ENCODE measurements at regions of chr1 and their contacts with region 1.

Region 1: DNA sequence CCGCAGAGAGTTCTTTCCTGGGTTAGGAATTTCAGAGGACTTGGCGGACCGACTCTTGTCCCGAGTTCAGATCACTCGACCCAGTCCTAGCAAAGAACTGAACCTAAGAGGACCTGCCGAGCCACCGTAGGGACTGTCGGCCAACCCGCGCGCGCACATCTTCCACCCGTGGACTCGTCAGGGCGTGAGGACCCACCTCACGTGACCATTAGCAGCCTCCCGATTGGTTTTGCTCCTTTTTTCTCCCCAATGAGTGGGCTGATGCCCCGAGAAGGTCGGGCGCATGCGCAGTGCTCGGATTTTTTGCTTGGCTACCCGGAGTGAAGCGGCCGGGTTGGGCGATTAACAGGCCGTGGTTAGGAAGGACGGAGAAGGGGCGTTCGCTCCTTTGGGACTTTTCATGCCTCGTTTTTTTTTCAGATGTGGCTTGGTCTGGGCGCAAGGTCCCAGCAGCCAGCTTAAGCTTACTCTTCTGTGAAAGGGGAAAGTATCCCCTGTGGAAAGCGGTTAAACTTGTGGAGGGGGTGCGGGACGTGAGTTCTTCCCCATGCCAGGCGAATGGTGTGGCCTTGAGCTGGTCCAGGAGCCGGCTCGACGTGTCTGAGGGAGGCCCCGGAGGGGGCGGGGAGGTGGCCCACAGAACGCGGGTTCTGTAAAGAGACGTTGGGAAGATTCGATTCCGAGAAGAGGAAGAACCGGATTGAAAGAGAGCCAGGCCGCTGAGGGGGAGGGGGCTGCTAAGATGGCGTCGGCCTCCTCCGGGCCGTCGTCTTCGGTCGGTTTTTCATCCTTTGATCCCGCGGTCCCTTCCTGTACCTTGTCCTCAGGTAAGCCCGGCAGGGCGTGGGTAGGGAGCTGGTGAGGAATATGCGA is at the start of gene PIP5K1A:
- DNase-seq: peak; percentile 96 to 100 (median 99)
- ATAC-seq: peak; percentile 94
- H3K4me3 ChIP-seq: peak within 1 kb of the TSS; percentile 88 to 91
- H3K4me3 Mint-ChIP-seq: peak within 1 kb of the TSS; percentile 97
- H3K27ac ChIP-seq: peak within 1 kb of the TSS; percentile 78 to 86
- H3K27ac Mint-ChIP-seq: peak within 1 kb of the TSS; percentile 92
- H3K4me1 ChIP-seq: peaks cover 28% of the 10 kb centered on the region
- H3K4me1 Mint-ChIP-seq: peaks cover 45% of the 10 kb centered on the region
- H3K27me3 ChIP-seq: no peaks in the 10 kb centered on the region
- H3K27me3 Mint-ChIP-seq: no peaks in the 10 kb centered on the region
- CTCF ChIP-seq: no peak
- total RNA-seq, gene PIP5K1A: 37.2 to 48.2 TPM

Region 2: DNA sequence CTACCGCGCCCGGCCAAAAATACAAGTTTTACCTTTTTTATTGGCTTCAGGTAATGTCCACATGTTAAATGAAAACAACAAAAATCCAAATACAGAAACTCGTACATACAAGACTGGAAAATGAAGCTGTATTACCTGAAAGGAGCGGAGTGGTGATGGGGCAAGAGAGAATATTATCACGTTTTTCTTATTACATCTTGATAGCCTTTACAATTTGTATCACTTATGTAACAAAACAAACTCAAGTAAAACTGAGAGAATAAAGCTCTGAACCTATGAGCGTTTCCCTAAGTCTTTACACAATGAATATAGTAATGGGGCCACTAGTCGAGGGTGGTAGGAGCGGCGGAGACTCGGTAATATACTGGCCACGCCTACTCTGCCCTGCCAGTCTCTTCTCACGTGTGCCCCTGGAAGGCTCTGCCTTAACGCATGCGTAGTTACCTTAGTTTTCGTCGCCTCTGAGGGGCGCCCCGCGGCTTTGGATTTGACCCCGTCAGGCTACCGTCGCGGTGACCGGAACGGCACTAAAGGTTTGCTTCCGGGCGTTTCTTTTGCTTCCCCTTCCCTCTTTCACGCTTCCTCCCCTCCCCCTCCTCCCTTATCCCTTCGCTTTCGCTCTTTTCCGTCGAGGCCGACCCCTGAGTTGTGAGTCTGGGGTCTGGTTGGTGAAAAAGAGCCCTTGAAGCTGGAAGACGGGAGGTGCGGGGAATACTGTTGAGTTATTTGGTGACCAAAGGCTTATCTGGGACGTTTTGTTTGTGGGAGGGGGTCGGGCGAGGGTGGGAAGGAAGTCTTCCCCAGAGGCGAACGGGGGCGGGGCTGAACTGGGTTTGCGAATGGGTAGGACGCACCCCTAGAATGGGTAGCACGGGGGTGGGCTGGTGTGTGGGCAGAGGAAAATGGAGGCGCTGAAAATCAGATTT is 272.4 kb before region 1 on chr1 and contains the start of gene SETDB1:
- CTCF ChIA-PET with region 1: no interaction called
- POLR2A ChIA-PET with region 1: no interaction called
- intact Hi-C with region 1: no loop called
- DNase-seq: peak; percentile 84 to 98 (median 91)
- ATAC-seq: peak; percentile 96
- H3K4me3 ChIP-seq: peak within 1 kb of the TSS; percentile 91 to 93
- H3K4me3 Mint-ChIP-seq: peak within 1 kb of the TSS; percentile 94
- H3K27ac ChIP-seq: peak within 1 kb of the TSS; percentile 79 to 93
- H3K27ac Mint-ChIP-seq: peak within 1 kb of the TSS; percentile 93
- H3K4me1 ChIP-seq: peaks cover 17% of the 10 kb centered on the region
- H3K4me1 Mint-ChIP-seq: peaks cover 31% of the 10 kb centered on the region
- H3K27me3 ChIP-seq: no peaks in the 10 kb centered on the region
- H3K27me3 Mint-ChIP-seq: no peaks in the 10 kb centered on the region
- CTCF ChIP-seq: no peak
- total RNA-seq, gene SETDB1: 44.1 to 47.4 TPM

Region 3: DNA sequence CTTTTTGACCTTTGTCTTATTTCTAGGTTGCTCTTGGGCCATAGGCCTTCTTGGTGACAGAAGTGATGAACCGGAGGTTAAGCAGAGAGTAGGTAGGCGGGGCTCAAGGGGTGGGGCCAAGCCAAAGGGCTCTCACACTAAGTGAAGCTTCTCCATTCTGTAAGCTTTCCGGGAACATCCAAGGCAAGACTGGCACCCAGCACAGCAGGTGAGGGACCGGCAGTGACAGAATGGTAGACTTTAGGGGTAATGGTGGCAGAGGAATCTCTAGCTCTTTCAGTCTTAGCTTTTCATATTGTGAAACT is 42.0 kb before region 1 on chr1 and contains the start of gene TNFAIP8L2:
- CTCF ChIA-PET with region 1: interaction called, 3 read pairs
- POLR2A ChIA-PET with region 1: interaction called, 3 read pairs
- intact Hi-C with region 1: loop called in 1 of 2 experiments (anchors 2 kb)
- DNase-seq: peak; percentile 45 to 86 (median 74)
- ATAC-seq: peak; percentile 83
- H3K4me3 ChIP-seq: peak within 1 kb of the TSS; percentile 83 to 89
- H3K4me3 Mint-ChIP-seq: peak within 1 kb of the TSS; percentile 97
- H3K27ac ChIP-seq: peak within 1 kb of the TSS; percentile 55 to 70
- H3K27ac Mint-ChIP-seq: peak within 1 kb of the TSS; percentile 92
- H3K4me1 ChIP-seq: peaks cover 35% of the 10 kb centered on the region
- H3K4me1 Mint-ChIP-seq: peaks cover 55% of the 10 kb centered on the region
- H3K27me3 ChIP-seq: no peaks in the 10 kb centered on the region
- H3K27me3 Mint-ChIP-seq: no peaks in the 10 kb centered on the region
- CTCF ChIP-seq: no peak
- total RNA-seq, gene TNFAIP8L2: 0.62 to 0.86 TPM

Region 4: GRCh38 chr1:151211972-151212705 is 13.6 kb after region 1 on chr1:
- CTCF ChIA-PET with region 1: interaction called, 3 read pairs
- POLR2A ChIA-PET with region 1: interaction called, 4 read pairs
- intact Hi-C with region 1: loop called in 1 of 2 experiments (anchors 1 kb)
- DNase-seq: no peak
- ATAC-seq: no peak
- H3K4me3 ChIP-seq: no peak overlapping the region
- H3K4me3 Mint-ChIP-seq: no peak overlapping the region
- H3K27ac ChIP-seq: no peak overlapping the region
- H3K27ac Mint-ChIP-seq: peak overlapping the region; percentile 86
- H3K4me1 ChIP-seq: no peaks in the 10 kb centered on the region
- H3K4me1 Mint-ChIP-seq: peaks cover 26% of the 10 kb centered on the region
- H3K27me3 ChIP-seq: no peaks in the 10 kb centered on the region
- H3K27me3 Mint-ChIP-seq: no peaks in the 10 kb centered on the region
- CTCF ChIP-seq: no peak

Region 5: GRCh38 chr1:151327223-151327902 is 128.9 kb after region 1 on chr1 and contains the start of gene PI4KB:
- CTCF ChIA-PET with region 1: no interaction called
- POLR2A ChIA-PET with region 1: no interaction called
- intact Hi-C with region 1: loop called in 1 of 2 experiments (anchors 5 kb)
- DNase-seq: peak; percentile 76 to 98 (median 87)
- ATAC-seq: peak; percentile 93
- H3K4me3 ChIP-seq: peak within 1 kb of the TSS; percentile 67 to 86
- H3K4me3 Mint-ChIP-seq: peak within 1 kb of the TSS; percentile 88
- H3K27ac ChIP-seq: peak within 1 kb of the TSS; percentile 75 to 98
- H3K27ac Mint-ChIP-seq: peak within 1 kb of the TSS; percentile 93
- H3K4me1 ChIP-seq: peaks cover 15% of the 10 kb centered on the region
- H3K4me1 Mint-ChIP-seq: peaks cover 47% of the 10 kb centered on the region
- H3K27me3 ChIP-seq: no peaks in the 10 kb centered on the region
- H3K27me3 Mint-ChIP-seq: no peaks in the 10 kb centered on the region
- CTCF ChIP-seq: no peak
- total RNA-seq, gene PI4KB: 63.1 to 63.2 TPM

Region 6: DNA sequence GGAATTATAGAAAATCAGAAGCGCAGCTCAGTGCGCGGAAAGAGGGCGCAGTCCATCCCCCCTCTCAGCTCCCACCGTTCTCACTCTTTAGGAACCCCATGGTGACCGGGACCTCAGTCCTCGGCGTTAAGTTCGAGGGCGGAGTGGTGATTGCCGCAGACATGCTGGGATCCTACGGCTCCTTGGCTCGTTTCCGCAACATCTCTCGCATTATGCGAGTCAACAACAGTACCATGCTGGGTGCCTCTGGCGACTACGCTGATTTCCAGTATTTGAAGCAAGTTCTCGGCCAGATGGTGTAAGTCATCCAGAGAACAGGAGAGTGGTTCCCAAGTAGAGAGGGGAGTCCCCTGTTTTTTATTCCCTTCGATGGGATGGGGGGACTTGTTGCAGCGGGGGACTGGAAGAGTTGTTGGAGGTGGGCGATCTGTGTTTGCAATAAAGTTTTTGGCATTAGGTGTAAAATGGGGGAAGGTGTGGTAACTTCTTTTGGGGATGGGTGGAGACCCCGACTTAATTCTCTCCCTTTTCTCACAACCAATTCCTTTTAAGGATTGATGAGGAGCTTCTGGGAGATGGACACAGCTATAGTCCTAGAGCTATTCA is 201.5 kb after region 1 on chr1:
- CTCF ChIA-PET with region 1: no interaction called
- POLR2A ChIA-PET with region 1: no interaction called
- intact Hi-C with region 1: loop called (anchors 1 to 5 kb)
- DNase-seq: peak in 1 of 9 experiments; percentile 13
- ATAC-seq: no peak
- H3K4me3 ChIP-seq: peak overlapping the region; percentile 90 to 94
- H3K4me3 Mint-ChIP-seq: peak overlapping the region; percentile 89
- H3K27ac ChIP-seq: peak overlapping the region; percentile 93 to 94
- H3K27ac Mint-ChIP-seq: peak overlapping the region; percentile 97
- H3K4me1 ChIP-seq: peaks cover 16% of the 10 kb centered on the region
- H3K4me1 Mint-ChIP-seq: peaks cover 27% of the 10 kb centered on the region
- H3K27me3 ChIP-seq: no peaks in the 10 kb centered on the region
- H3K27me3 Mint-ChIP-seq: no peaks in the 10 kb centered on the region
- CTCF ChIP-seq: no peak

Region 7: GRCh38 chr1:151611832-151612500 is 413.5 kb after region 1 on chr1 and contains the start of gene SNX27:
- CTCF ChIA-PET with region 1: no interaction called
- POLR2A ChIA-PET with region 1: no interaction called
- intact Hi-C with region 1: loop called in 1 of 2 experiments (anchors 5 kb)
- DNase-seq: peak; percentile 74 to 95 (median 87)
- ATAC-seq: peak; percentile 89
- H3K4me3 ChIP-seq: peak within 1 kb of the TSS; percentile 64 to 93
- H3K4me3 Mint-ChIP-seq: peak within 1 kb of the TSS; percentile 99
- H3K27ac ChIP-seq: peak within 1 kb of the TSS; percentile 54 to 59
- H3K27ac Mint-ChIP-seq: peak within 1 kb of the TSS; percentile 95
- H3K4me1 ChIP-seq: peaks cover 16% of the 10 kb centered on the region
- H3K4me1 Mint-ChIP-seq: peaks cover 38% of the 10 kb centered on the region
- H3K27me3 ChIP-seq: no peaks in the 10 kb centered on the region
- H3K27me3 Mint-ChIP-seq: peaks cover 4% of the 10 kb centered on the region
- CTCF ChIP-seq: no peak
- total RNA-seq, gene SNX27: 9.8 to 12.2 TPM

Measured in CD8-positive, alpha-beta T cell (primary cell).